ENCODE measurements at regions of chr9 and their contacts with region 1.

Region 1: DNA sequence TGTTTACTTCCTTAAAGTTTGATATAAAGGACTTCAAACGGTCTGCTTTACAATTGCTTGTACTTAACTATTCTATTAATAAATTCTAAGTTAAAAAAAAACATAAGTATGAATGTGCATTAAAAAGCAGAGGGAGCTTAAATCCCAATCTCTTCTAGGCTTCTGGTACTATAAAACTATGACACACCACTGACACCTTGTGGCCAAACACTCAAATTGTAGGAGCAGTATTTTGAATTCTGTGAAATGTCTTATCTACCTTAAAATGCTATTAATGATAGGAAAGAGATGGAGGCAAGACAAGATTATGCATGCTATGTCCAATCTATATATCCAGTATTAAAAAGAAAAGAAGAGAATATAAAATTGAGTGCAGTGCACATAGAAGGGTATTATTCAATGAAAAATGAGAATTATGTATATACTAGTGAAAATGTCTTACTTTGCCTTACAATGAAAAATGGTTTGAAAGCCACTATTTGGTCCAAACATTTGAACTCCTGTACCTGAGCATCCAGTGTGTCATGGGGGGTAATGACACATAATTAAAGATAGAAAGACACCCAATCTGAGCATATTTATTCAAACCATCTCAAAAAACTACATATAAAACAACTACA is 87.6 kb downstream of the ERP44 start:
- DNase-seq: peak; percentile 47
- CTCF ChIP-seq: peak; percentile 60

Region 2: DNA sequence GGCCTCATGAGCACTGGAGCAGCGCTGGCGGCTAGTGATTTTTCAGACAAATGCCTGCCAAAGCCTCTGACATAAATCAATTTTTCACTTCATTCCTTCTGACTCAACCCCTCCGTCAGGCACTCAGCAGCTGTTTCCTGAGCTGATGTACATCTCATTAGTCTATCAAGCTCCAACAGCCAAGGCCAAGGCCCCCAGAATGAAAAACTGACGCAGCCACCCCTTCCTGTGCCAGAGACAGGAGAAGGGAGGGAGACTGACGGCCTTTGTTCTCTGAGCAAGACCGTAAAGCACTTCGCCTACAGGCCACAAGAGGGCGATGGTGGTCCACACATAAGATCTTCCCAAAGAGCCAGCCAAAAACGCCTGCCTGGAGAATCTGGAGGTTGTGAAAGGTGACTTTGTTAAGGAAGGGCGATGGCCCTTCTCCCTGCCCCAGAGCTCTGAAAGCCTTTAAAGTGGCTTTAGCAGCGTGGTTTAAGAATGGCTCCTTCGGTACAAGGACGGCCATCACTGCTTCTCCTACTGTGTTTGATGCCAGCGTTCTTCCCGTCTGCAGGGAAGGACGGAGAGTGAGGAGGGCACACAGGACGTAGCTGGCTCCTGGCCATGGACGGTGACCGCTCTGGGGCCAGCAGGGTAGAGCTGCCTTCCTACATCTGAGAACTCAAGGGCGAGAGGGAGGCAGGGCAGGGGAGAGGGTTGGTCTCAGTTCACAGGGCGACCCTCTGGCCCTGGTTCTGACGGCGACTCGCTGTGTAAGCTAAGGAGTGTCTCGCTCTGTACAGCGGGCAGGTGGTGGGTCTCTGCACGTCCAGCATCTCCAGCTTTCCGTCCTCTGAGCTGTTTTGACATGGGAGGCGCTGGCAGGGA is 826.5 kb before region 1 on chr9:
- in situ Hi-C with region 1: loop called (anchors 25 kb)
- DNase-seq: peak; percentile 69
- CTCF ChIP-seq: peak; percentile 93

Region 3: GRCh38 chr9:99299211-99300102 is 711.7 kb before region 1 on chr9:
- in situ Hi-C with region 1: loop called (anchors 25 kb)
- DNase-seq: peak; percentile 59
- CTCF ChIP-seq: peak; percentile 45

Region 4: DNA sequence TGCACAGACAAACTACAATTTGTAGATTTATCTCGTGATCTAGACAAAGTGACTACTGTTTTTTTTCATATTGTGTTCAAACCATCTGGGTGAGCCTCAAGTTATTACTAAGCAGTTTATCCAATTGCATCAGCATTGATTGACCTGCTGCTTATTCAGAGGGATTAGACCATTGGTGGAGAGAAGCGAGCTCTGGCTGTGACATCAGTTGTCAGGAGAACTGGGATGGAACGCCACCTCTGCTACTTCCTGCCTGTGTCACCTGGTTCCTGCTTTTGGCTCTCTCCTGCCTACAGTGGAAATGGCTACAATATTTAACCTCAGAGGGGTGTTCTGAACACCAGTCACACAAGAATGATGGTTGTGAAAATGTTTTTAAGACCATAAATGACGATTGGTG is 177.4 kb before region 1 on chr9:
- in situ Hi-C with region 1: loop called (anchors 10 kb)
- DNase-seq: no peak
- CTCF ChIP-seq: no peak

Measured in GM13977 (cell line).